CD4-positive, alpha-beta memory T cell (primary cell): ENCODE measurements at regions of chr10 and their contacts with region 1.

Region 1: DNA sequence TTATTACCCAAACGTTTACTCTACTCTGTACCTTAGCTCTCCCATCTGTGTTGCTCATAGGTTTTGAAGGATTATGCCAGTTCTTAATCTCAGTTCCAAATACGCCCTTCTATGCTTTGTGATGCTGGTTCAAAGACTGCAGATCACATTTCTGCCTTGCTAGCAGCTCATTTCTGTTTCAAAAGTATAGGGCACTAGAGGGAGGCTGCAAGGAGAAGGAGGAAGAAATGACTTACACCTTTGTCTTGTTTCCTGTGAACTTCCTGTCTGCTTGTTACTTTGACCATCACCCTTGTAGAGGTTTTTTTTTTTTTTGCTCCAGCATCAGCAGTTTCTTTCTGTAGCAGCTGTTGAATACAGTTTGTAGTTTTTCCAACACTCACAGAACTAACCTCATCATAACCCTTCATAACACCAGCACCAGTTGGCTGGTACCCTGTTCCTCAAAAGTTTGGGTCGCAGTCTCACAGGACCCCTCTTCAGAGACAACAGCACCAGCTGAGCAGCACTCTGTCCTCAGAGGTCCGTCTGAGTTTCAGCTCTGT is 16.5 kb downstream of the SLK start:
- DNase-seq: peak; percentile 35 to 40 (median 37)
- H3K4me3 ChIP-seq: peak overlapping the region in 1 of 2 donors; percentile 34
- H3K4me3 Mint-ChIP-seq: peak overlapping the region; percentile 57 to 89 (median 76)
- H3K27ac ChIP-seq: peak overlapping the region; percentile 43
- H3K27ac Mint-ChIP-seq: peak overlapping the region; percentile 65 to 94 (median 76)
- H3K4me1 ChIP-seq: peaks cover 70% of the 10 kb centered on the region
- H3K4me1 Mint-ChIP-seq: peaks cover 52 to 79% (median 65%) of the 10 kb centered on the region in 4 donors
- H3K27me3 ChIP-seq: no peaks in the 10 kb centered on the region
- H3K27me3 Mint-ChIP-seq: no peaks in the 10 kb centered on the region

Region 2: GRCh38 chr10:103712570-103713498 is 270.6 kb before region 1 on chr10:
- CTCF ChIA-PET with region 1: no interaction called
- POLR2A ChIA-PET with region 1: no interaction called
- intact Hi-C with region 1: no loop called
- DNase-seq: peak; percentile 69 to 78 (median 71)
- H3K4me3 ChIP-seq: no peak overlapping the region
- H3K4me3 Mint-ChIP-seq: no peak overlapping the region
- H3K27ac ChIP-seq: no peak overlapping the region
- H3K27ac Mint-ChIP-seq: peak overlapping the region in 3 of 7 donors; percentile 6 to 56 (median 7)
- H3K4me1 ChIP-seq: no peaks in the 10 kb centered on the region
- H3K4me1 Mint-ChIP-seq: peaks cover 0 to 4% (median 1%) of the 10 kb centered on the region in 4 donors
- H3K27me3 ChIP-seq: no peaks in the 10 kb centered on the region
- H3K27me3 Mint-ChIP-seq: no peaks in the 10 kb centered on the region

Region 3: DNA sequence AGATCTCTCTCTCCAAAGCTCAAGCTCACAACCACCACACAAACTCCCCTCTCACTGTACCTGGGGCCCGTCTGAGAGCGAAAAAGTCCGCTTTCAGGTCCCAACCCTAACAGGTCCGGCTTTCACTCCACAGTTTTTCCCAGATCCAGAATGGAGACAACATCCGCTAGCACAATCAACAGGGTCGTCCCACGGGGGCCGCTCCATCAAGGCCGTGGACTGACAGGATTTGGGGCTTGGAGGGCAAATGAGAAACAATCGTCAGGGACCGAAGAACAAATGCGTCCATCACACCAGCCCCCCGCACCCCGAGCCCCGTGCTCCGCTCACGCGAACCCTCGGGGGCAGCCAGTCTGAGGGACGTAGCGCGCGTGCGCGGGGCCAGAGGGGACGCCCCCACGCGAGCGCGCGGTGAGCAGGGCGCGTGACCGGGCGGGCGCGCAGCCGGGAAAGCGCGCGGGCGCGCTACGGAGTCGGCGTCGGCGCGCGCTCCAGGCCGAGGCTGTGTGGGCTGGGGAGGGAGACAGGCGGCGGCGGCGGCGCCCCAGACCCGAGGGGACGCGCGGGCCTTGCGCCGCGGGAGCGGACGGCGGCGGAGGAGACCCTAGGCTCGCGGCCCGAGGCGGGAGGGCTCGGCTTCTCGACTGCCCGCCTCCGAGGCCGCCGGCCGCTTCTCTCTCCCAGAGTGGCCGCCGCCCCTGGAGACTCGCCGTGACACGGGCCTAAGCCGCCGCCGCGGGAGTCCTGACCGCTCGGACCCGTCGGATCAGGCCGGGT is 16.6 kb before region 1 on chr10 and contains the start of gene SLK:
- CTCF ChIA-PET with region 1: interaction called, 4 read pairs
- POLR2A ChIA-PET with region 1: interaction called, 18 read pairs
- intact Hi-C with region 1: loop called (anchors 1 kb)
- DNase-seq: peak; percentile 78 to 90 (median 86)
- H3K4me3 ChIP-seq: peak within 1 kb of the TSS; percentile 59 to 99
- H3K4me3 Mint-ChIP-seq: peak within 1 kb of the TSS; percentile 94 to 100 (median 98)
- H3K27ac ChIP-seq: peak within 1 kb of the TSS; percentile 74
- H3K27ac Mint-ChIP-seq: peak within 1 kb of the TSS; percentile 95 to 98 (median 96)
- H3K4me1 ChIP-seq: peaks cover 33% of the 10 kb centered on the region
- H3K4me1 Mint-ChIP-seq: peaks cover 27 to 48% (median 36%) of the 10 kb centered on the region in 4 donors
- H3K27me3 ChIP-seq: no peaks in the 10 kb centered on the region
- H3K27me3 Mint-ChIP-seq: no peaks in the 10 kb centered on the region
- total RNA-seq, gene SLK: 30.9 to 31.1 TPM